GM13977 (cell line): ENCODE measurements at regions of chr3 and their contacts with region 1.

Region 1: GRCh38 chr3:127652231-127652995 is 20.3 kb upstream of the ABTB1 start:
- DNase-seq: peak; percentile 76
- CTCF ChIP-seq: peak; percentile 85

Region 2: DNA sequence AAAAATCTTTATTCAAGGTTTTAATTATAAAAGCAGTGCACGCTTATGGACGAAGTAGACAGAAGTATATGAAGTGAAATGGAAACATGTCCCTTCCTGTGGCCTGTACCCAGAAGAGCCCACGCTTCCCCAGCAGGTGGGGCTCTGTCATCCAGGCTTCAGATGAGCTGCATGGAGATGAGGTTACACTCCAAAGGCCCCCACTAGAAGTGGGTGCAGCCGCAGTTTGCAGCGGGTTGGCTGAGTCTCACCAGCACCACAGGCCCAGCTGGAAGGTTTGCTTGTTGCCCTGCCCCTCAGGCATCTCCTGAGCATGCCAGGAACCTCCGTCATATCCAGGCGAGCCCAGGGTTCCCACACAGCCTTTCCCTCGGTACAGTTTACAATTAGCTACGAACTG is 397.7 kb before region 1 on chr3:
- in situ Hi-C with region 1: no loop called
- DNase-seq: peak; percentile 44
- CTCF ChIP-seq: peak; percentile 26

Region 3: GRCh38 chr3:127482216-127483004 is 170.0 kb before region 1 on chr3:
- in situ Hi-C with region 1: no loop called
- DNase-seq: peak; percentile 7
- CTCF ChIP-seq: no peak

Region 4: GRCh38 chr3:127959846-127960245 is 307.4 kb after region 1 on chr3:
- in situ Hi-C with region 1: loop called (anchors 10 kb)
- DNase-seq: peak; percentile 29
- CTCF ChIP-seq: peak; percentile 78